ENCODE measurements at regions of chr7 and their contacts with region 1.

Region 1: GRCh38 chr7:155344600-155345433 is 47.1 kb downstream of the INSIG1 start:
- DNase-seq: peak; percentile 66 to 84
- H3K4me3 ChIP-seq: peak overlapping the region; percentile 37
- H3K27ac ChIP-seq: no peak overlapping the region
- H3K4me1 ChIP-seq: peaks cover 4% of the 10 kb centered on the region
- H3K27me3 ChIP-seq: peaks cover 50% of the 10 kb centered on the region
- CTCF ChIP-seq: peak; percentile 89

Region 2: DNA sequence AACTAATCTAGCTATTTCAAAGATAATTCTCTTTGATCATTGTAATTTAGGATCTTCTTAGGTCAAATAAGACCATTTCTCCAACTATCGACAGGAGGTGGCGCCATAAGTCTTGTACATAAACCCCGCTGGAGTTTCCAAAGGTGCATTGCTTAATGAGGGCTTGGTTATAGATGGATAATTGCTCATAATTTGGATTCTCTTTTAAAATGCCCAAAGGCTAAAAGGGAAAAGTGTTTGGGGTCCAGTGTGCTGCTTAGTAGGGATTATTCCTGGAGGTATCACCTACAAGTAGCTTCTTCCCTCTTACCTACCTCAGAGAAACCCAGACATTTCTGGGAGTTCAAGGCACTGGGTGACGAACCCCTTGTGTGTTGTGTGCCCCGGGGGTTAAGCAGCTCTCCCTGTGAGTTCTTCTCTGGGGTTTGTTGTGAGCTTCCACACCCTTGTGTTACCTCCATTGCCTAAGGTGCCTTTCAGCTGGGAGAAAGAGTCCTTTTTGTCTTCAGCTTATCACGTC is 417.1 kb before region 1 on chr7:
- CTCF ChIA-PET with region 1: no interaction called
- POLR2A ChIA-PET with region 1: no interaction called
- intact Hi-C with region 1: loop called (anchors 1 kb)
- DNase-seq: peak; percentile 68 to 79
- H3K4me3 ChIP-seq: peak overlapping the region; percentile 63
- H3K27ac ChIP-seq: peak overlapping the region; percentile 20; the same call in 1 of the 2 replicates
- H3K4me1 ChIP-seq: peaks cover 7% of the 10 kb centered on the region; the same call in 1 of the 2 replicates
- H3K27me3 ChIP-seq: peaks cover 31% of the 10 kb centered on the region
- CTCF ChIP-seq: peak; percentile 96

Region 3: GRCh38 chr7:155003376-155004214 is 341.2 kb before region 1 on chr7:
- CTCF ChIA-PET with region 1: interaction called, 15 read pairs
- POLR2A ChIA-PET with region 1: no interaction called
- intact Hi-C with region 1: loop called (anchors 2 kb)
- DNase-seq: peak; percentile 81 to 86
- H3K4me3 ChIP-seq: peak overlapping the region; percentile 63
- H3K27ac ChIP-seq: peak overlapping the region; percentile 67
- H3K4me1 ChIP-seq: peaks cover 22% of the 10 kb centered on the region
- H3K27me3 ChIP-seq: no peaks in the 10 kb centered on the region
- CTCF ChIP-seq: no peak

Region 4: GRCh38 chr7:155230168-155230593 is 114.6 kb before region 1 on chr7:
- CTCF ChIA-PET with region 1: no interaction called
- POLR2A ChIA-PET with region 1: no interaction called
- intact Hi-C with region 1: loop called (anchors 1 kb)
- DNase-seq: peak; percentile 96 to 100
- H3K4me3 ChIP-seq: 0 out of 2 replicates have a peak overlapping the region, but pooled peaks have one; percentile 2
- H3K27ac ChIP-seq: peak overlapping the region; percentile 71
- H3K4me1 ChIP-seq: peaks cover 16% of the 10 kb centered on the region
- H3K27me3 ChIP-seq: peaks cover 4% of the 10 kb centered on the region; the same call in 1 of the 2 replicates
- CTCF ChIP-seq: no peak

Region 5: DNA sequence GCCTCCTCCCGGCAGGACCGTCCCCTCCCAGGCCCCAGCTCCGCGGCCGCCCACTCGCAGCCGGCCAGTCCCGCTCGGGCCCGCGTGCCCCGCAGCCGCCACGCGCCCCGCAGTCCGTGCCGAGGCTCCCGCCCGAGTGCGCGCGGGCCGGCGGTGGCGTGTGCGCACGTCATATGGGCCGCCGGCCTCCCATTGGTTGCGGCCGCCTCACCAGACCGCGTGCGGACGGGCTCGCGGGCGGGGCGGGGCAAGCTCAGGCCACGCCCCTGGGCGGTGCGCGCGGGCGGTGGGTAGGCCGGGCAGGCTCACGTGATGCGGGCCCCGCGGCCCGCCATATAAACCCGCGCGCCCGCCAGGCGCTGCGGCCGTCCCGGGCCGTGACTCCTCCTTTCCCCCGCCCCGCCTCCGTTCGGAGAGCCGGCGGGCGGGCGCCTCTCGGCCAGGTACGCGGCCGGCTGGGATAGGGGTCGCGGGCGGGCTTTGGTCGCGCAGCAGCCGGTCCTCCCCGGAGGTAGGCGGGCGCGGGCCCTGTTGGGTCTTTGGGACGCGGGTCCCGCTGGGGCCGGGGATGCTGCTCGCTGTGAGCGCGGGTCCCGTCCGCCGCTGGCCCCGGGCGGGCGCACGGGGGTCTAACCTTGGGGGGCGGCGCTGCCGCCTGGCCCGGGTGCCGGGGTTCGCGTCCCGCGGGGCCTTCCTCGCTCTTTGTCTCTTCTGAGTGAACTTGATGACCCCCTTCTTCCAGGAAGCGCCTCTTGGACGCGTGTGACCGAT is 47.1 kb before region 1 on chr7 and contains the start of gene INSIG1:
- CTCF ChIA-PET with region 1: interaction called, 10 read pairs
- POLR2A ChIA-PET with region 1: no interaction called
- intact Hi-C with region 1: no loop called
- DNase-seq: peak; percentile 83 to 98
- H3K4me3 ChIP-seq: peak within 1 kb of the TSS; percentile 90
- H3K27ac ChIP-seq: peak within 1 kb of the TSS; percentile 81
- H3K4me1 ChIP-seq: peaks cover 42% of the 10 kb centered on the region
- H3K27me3 ChIP-seq: no peaks in the 10 kb centered on the region
- CTCF ChIP-seq: no peak
- total RNA-seq, gene INSIG1: 75.7 and 103 TPM in 2 replicates

Region 6: GRCh38 chr7:155713384-155713783 is 368.6 kb after region 1 on chr7:
- CTCF ChIA-PET with region 1: no interaction called
- POLR2A ChIA-PET with region 1: no interaction called
- intact Hi-C with region 1: no loop called
- DNase-seq: no peak
- H3K4me3 ChIP-seq: no peak overlapping the region
- H3K27ac ChIP-seq: no peak overlapping the region
- H3K4me1 ChIP-seq: no peaks in the 10 kb centered on the region
- H3K27me3 ChIP-seq: no peaks in the 10 kb centered on the region
- CTCF ChIP-seq: no peak

Measured in PC-9 (cell line).